ENCODE measurements at regions of chr11 and their contacts with region 1.

Region 1: GRCh38 chr11:27698872-27699474 is 1.3 kb downstream of the BDNF start:
- DNase-seq: peak; percentile 88 to 92
- ATAC-seq: peak; percentile 69 to 82
- H3K4me3 ChIP-seq: peak overlapping the region; percentile 78
- H3K27ac ChIP-seq: peak overlapping the region; percentile 90 to 96
- H3K4me1 ChIP-seq: peaks cover 48% of the 10 kb centered on the region
- CTCF ChIP-seq: peak; percentile 81
- EP300 ChIP-seq: no peak
- POLR2A ChIP-seq: no peak; the same call in 1 of the 2 replicates
- RAD21 ChIP-seq: peak; percentile 79 to 95

Region 2: GRCh38 chr11:27553186-27553585 is 145.8 kb before region 1 on chr11:
- CTCF ChIA-PET with region 1: no interaction called
- POLR2A ChIA-PET with region 1: no interaction called
- DNase-seq: no peak
- ATAC-seq: no peak
- H3K4me3 ChIP-seq: no peak overlapping the region
- H3K27ac ChIP-seq: no peak overlapping the region
- H3K4me1 ChIP-seq: no peaks in the 10 kb centered on the region
- CTCF ChIP-seq: no peak
- EP300 ChIP-seq: no peak
- POLR2A ChIP-seq: no peak
- RAD21 ChIP-seq: no peak

Region 3: GRCh38 chr11:27603376-27603990 is 95.5 kb before region 1 on chr11:
- CTCF ChIA-PET with region 1: no interaction called
- POLR2A ChIA-PET with region 1: no interaction called
- DNase-seq: no peak
- ATAC-seq: no peak
- H3K4me3 ChIP-seq: no peak overlapping the region
- H3K27ac ChIP-seq: no peak overlapping the region
- H3K4me1 ChIP-seq: no peaks in the 10 kb centered on the region
- CTCF ChIP-seq: no peak
- EP300 ChIP-seq: no peak
- POLR2A ChIP-seq: no peak
- RAD21 ChIP-seq: no peak

Region 4: DNA sequence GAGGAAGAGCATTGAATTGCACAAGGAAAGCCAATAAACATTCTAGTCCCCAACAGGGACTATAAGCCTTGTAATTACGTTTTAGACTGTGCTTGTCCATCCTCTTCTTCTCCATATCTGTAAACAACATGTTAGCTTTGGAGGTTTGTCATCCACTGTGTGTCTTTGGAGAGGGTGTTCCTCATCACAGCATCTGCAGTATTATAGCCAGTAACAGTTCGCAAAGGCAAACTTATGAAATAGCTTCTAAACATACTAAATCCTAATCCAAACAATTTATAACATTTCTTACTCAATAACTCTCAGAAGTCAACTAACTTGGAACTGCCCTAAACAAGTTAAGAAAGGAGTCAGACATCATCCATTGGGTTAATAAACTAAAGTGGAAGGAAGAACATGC is 11.6 kb after region 1 on chr11:
- CTCF ChIA-PET with region 1: interaction called, 95 read pairs
- POLR2A ChIA-PET with region 1: interaction called, 3 read pairs
- DNase-seq: no peak
- ATAC-seq: peak in 1 of 2 experiments; percentile 33; a peak in 2 of 6 replicates
- H3K4me3 ChIP-seq: no peak overlapping the region
- H3K27ac ChIP-seq: no peak overlapping the region
- H3K4me1 ChIP-seq: peaks cover 4% of the 10 kb centered on the region; the same call in 1 of the 3 replicates
- CTCF ChIP-seq: no peak
- EP300 ChIP-seq: no peak
- POLR2A ChIP-seq: no peak
- RAD21 ChIP-seq: no peak

Region 5: DNA sequence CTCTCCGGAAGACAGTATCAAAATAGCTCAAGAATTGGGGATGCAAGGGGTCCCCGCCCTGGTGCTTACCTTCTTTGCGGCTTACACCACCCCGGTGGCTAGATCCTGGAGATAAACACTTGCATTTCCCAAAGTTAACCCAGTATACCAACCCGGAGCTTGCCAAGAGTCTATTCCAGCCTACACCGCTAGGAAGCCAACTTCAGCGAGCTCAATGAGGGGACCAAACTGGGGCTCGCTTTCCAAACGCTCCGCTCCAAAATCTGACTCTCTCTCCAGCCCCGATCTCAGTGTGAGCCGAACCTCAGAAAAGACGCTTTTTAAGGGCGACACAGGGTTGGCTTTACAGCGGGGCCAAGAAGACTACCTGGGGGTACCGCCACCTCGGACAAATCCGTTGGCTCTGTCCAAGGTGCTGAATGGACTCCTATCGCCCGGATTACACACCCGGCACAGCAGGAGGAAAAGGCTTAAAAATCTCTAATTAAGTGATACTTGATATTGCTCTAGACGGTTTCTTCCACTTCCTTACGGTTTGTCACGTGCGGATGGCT is 21.4 kb after region 1 on chr11:
- CTCF ChIA-PET with region 1: interaction called, 95 read pairs
- POLR2A ChIA-PET with region 1: interaction called, 78 read pairs
- DNase-seq: peak; percentile 66 to 67
- ATAC-seq: peak in 1 of 2 experiments; percentile 53; a peak in 3 of 6 replicates
- H3K4me3 ChIP-seq: peak overlapping the region; percentile 88; the same call in 2 of the 3 replicates
- H3K27ac ChIP-seq: no peak overlapping the region
- H3K4me1 ChIP-seq: peaks cover 30% of the 10 kb centered on the region
- CTCF ChIP-seq: peak; percentile 16; the same call in 1 of the 3 replicates
- EP300 ChIP-seq: no peak
- POLR2A ChIP-seq: no peak
- RAD21 ChIP-seq: peak in 1 of 2 experiments; percentile 14; a peak in 2 of 5 replicates

Region 6: DNA sequence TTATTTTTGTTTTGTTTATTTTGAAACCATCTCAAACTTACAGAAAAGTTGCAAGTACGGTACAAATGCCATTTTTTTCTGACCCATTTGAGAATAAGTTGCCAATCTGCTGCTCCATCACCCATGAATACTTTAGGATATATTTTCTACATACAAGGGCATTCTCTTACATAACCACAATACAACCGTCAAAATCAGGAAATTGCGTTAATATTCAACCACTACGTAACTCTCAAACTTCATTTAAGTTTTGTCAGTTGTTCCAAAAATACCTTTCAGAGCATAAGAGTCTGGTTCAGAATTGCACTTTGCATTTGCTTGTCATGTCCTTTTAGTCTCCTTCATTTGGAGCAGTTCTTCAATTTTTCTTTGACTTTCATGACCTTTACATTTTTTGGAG is 195.6 kb after region 1 on chr11:
- CTCF ChIA-PET with region 1: no interaction called
- POLR2A ChIA-PET with region 1: no interaction called
- DNase-seq: no peak
- ATAC-seq: no peak
- H3K4me3 ChIP-seq: no peak overlapping the region
- H3K27ac ChIP-seq: no peak overlapping the region
- H3K4me1 ChIP-seq: no peaks in the 10 kb centered on the region
- CTCF ChIP-seq: no peak
- EP300 ChIP-seq: no peak
- POLR2A ChIP-seq: no peak
- RAD21 ChIP-seq: no peak

Region 7: GRCh38 chr11:28107748-28108618 is 409.0 kb after region 1 on chr11 and contains the starts of genes KIF18A and METTL15:
- CTCF ChIA-PET with region 1: interaction called, 23 read pairs
- POLR2A ChIA-PET with region 1: interaction called, 31 read pairs
- DNase-seq: peak; percentile 70 to 100
- ATAC-seq: peak; percentile 94 to 96
- H3K4me3 ChIP-seq: peak within 1 kb of the TSS; percentile 59
- H3K27ac ChIP-seq: peak within 1 kb of the TSS; percentile 90 to 91
- H3K4me1 ChIP-seq: peaks cover 52% of the 10 kb centered on the region
- CTCF ChIP-seq: no peak
- EP300 ChIP-seq: no peak
- POLR2A ChIP-seq: peak; percentile 70
- RAD21 ChIP-seq: peak in 1 of 2 experiments; percentile 42; a peak in 1 of 5 replicates
- polyA plus RNA-seq, gene KIF18A: 29.8 and 47.2 TPM in 2 replicates
- polyA plus RNA-seq, gene METTL15: 21.9 and 23.5 TPM in 2 replicates

Region 8: GRCh38 chr11:28836285-28837081 is 1137.5 kb after region 1 on chr11:
- CTCF ChIA-PET with region 1: interaction called, 8 read pairs
- POLR2A ChIA-PET with region 1: interaction called, 31 read pairs
- DNase-seq: peak; percentile 78 to 99
- ATAC-seq: peak; percentile 96
- H3K4me3 ChIP-seq: no peak overlapping the region
- H3K27ac ChIP-seq: peak overlapping the region; percentile 95 to 99
- H3K4me1 ChIP-seq: peaks cover 45% of the 10 kb centered on the region
- CTCF ChIP-seq: no peak
- EP300 ChIP-seq: peak; percentile 99 to 100
- POLR2A ChIP-seq: no peak
- RAD21 ChIP-seq: peak; percentile 54 to 90

Region 9: DNA sequence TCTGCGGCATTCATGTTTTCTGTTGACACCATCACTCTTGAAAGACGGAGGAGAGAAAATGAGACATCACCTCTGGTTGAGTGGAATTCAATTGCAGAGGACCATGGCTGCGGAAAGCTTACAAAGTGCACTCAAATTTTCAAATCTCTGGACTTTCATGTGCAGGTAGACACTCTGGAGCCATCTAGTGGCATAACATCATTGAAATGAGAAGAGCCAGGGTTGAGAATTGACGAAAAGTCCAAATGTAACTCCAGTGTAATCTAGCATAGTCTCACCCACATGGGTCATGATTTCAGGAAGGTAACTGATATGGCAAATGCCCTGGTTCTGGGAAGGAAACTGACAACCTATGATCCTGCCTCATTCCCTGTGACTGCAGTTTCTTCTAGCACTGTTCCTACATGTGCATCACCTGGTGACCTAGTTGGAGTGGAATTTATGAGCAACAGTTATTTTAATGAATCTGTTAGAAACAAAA is 1630.0 kb after region 1 on chr11:
- CTCF ChIA-PET with region 1: interaction called, 20 read pairs
- POLR2A ChIA-PET with region 1: interaction called, 8 read pairs
- DNase-seq: peak; percentile 33 to 84
- ATAC-seq: peak; percentile 85 to 92
- H3K4me3 ChIP-seq: no peak overlapping the region
- H3K27ac ChIP-seq: peak overlapping the region; percentile 52 to 83
- H3K4me1 ChIP-seq: peaks cover 19% of the 10 kb centered on the region
- CTCF ChIP-seq: peak; percentile 86
- EP300 ChIP-seq: no peak; a peak in 1 of 5 replicates
- POLR2A ChIP-seq: no peak
- RAD21 ChIP-seq: peak; percentile 94 to 96

Region 10: GRCh38 chr11:29333993-29334775 is 1635.2 kb after region 1 on chr11:
- CTCF ChIA-PET with region 1: interaction called, 20 read pairs
- POLR2A ChIA-PET with region 1: interaction called, 8 read pairs
- DNase-seq: peak; percentile 61 to 74
- ATAC-seq: peak; percentile 96 to 98
- H3K4me3 ChIP-seq: no peak overlapping the region
- H3K27ac ChIP-seq: peak overlapping the region; percentile 77 to 83
- H3K4me1 ChIP-seq: peaks cover 20% of the 10 kb centered on the region
- CTCF ChIP-seq: peak; percentile 79
- EP300 ChIP-seq: no peak
- POLR2A ChIP-seq: no peak
- RAD21 ChIP-seq: peak; percentile 91 to 95

Measured in A549 (cell line).